ENCODE measurements at regions of chr2 and their contacts with region 1.

Region 1: GRCh38 chr2:39696838-39697237 is 31.1 kb downstream of the TMEM178A start:
- DNase-seq: no peak
- H3K4me3 ChIP-seq: no peak overlapping the region
- H3K27ac ChIP-seq: no peak overlapping the region
- H3K4me1 ChIP-seq: no peaks in the 10 kb centered on the region
- H3K27me3 ChIP-seq: no peaks in the 10 kb centered on the region
- CTCF ChIP-seq: peak; percentile 11 to 71 (median 52)
- POLR2A ChIP-seq: no peak

Region 2: GRCh38 chr2:39530411-39530866 is 166.4 kb before region 1 on chr2:
- intact Hi-C with region 1: loop called in 1 of 2 experiments (anchors 10 kb)
- DNase-seq: no peak
- H3K4me3 ChIP-seq: no peak overlapping the region
- H3K27ac ChIP-seq: no peak overlapping the region
- H3K4me1 ChIP-seq: peaks cover 3 to 11% of the 10 kb centered on the region in 2 donors
- H3K27me3 ChIP-seq: no peaks in the 10 kb centered on the region
- CTCF ChIP-seq: peak in 4 of 6 experiments; percentile 4 to 29 (median 26)
- POLR2A ChIP-seq: no peak

Region 3: GRCh38 chr2:39593439-39594393 is 103.1 kb before region 1 on chr2:
- intact Hi-C with region 1: loop called (anchors 10 kb)
- DNase-seq: peak; percentile 33 to 74 (median 59)
- H3K4me3 ChIP-seq: no peak overlapping the region
- H3K27ac ChIP-seq: no peak overlapping the region
- H3K4me1 ChIP-seq: no peaks in the 10 kb centered on the region
- H3K27me3 ChIP-seq: no peaks in the 10 kb centered on the region
- CTCF ChIP-seq: peak; percentile 38 to 70 (median 66)
- POLR2A ChIP-seq: no peak

Region 4: GRCh38 chr2:39620067-39620466 is 76.8 kb before region 1 on chr2:
- intact Hi-C with region 1: no loop called
- DNase-seq: peak; percentile 68 to 90 (median 88)
- H3K4me3 ChIP-seq: peak overlapping the region in 1 of 4 donors; percentile 34
- H3K27ac ChIP-seq: no peak overlapping the region
- H3K4me1 ChIP-seq: peaks cover 17 to 21% of the 10 kb centered on the region in 2 donors
- H3K27me3 ChIP-seq: no peaks in the 10 kb centered on the region
- CTCF ChIP-seq: no peak
- POLR2A ChIP-seq: no peak

Region 5: DNA sequence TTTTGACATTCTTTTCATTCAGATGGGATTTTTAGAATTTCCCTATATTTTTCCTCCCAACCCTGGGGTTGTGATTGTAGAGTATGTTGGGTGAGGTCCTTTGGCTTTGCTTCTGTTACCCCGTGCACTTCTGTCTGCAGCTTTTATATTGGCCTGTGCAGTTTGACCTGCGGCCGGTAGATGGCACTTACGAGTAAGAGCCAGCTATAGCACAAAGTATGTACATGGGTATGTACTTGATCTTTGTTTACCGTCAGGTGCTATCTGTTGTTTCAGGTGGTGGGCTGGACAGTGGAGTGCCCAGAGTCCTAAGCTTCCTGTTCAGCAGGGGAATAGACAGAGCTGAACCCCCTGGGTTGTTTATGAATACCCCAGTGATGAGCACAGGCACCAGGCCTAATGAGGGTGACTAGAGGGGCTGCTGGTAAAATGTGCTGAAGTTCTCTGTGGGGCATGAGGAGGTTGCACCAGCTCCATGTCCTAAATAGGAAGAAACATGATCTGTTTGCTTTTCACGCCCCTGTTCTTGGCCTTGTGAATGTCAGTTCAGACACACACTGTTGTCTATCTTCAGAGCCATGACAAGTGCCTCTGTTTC is 141.1 kb after region 1 on chr2:
- intact Hi-C with region 1: no loop called
- DNase-seq: peak in 2 of 7 donors; percentile 20 to 27
- H3K4me3 ChIP-seq: no peak overlapping the region
- H3K27ac ChIP-seq: no peak overlapping the region
- H3K4me1 ChIP-seq: no peaks in the 10 kb centered on the region
- H3K27me3 ChIP-seq: no peaks in the 10 kb centered on the region
- CTCF ChIP-seq: peak; percentile 35 to 76 (median 50)
- POLR2A ChIP-seq: no peak

Region 6: DNA sequence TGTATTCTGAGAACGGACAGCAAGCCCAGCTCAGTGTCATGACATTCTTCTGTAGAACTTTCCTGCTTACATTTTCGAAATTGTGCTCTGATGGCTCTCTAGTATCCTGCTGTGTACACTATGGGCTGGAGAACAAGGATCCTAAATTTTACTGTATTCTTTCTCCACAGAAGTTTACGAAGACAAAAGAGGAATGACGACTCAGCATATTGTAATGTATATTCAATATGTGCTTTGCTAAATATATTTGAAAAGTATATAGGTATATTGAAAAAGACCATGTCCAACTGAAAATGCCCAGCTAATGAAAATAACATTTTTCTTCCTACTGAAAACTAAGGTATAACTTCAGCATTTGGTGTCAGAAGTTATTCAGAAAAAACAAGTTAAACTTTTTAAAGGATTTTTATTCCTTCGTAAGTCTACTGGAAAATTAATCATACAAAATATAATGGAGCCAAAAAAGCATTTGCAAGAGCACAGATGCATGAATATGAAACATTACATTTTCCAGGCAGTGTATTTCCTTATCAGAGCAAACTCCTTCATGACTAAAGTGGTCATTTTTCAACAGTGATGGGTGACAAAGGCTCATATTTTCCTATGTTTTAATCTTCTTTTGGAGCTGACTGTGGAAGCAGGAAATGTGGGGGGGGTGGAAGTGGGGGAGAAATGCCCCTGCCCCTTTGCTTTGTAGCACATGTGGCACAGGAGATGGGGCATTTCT is 226.0 kb after region 1 on chr2:
- intact Hi-C with region 1: no loop called
- DNase-seq: no peak
- H3K4me3 ChIP-seq: no peak overlapping the region
- H3K27ac ChIP-seq: no peak overlapping the region
- H3K4me1 ChIP-seq: no peaks in the 10 kb centered on the region
- H3K27me3 ChIP-seq: no peaks in the 10 kb centered on the region
- CTCF ChIP-seq: no peak
- POLR2A ChIP-seq: no peak

Measured in adrenal gland (tissue), 19 donors.